Activated CD4-positive, alpha-beta T cell treated with anti-CD3 and anti-CD28 coated beads, Interleukin-2, amount 10 ng/mL, durations not matched to agents 7 days and 5 days (primary cell): ENCODE measurements at regions of chr17 and their contacts with region 1.

Region 1: GRCh38 chr17:27578718-27579085 is 52.3 kb upstream of the LGALS9 start:
- DNase-seq: peak; percentile 46
- H3K4me3 Mint-ChIP-seq: no peak overlapping the region
- H3K27ac Mint-ChIP-seq: peak overlapping the region; percentile 67
- H3K4me1 Mint-ChIP-seq: peaks cover 70% of the 10 kb centered on the region
- H3K27me3 Mint-ChIP-seq: no peaks in the 10 kb centered on the region

Region 2: GRCh38 chr17:27473748-27474609 is 104.7 kb before region 1 on chr17:
- CTCF ChIA-PET with region 1: interaction called, 10 read pairs
- POLR2A ChIA-PET with region 1: interaction called, 5 read pairs
- DNase-seq: peak; percentile 81
- H3K4me3 Mint-ChIP-seq: peak overlapping the region; percentile 55
- H3K27ac Mint-ChIP-seq: peak overlapping the region; percentile 97
- H3K4me1 Mint-ChIP-seq: peaks cover 93% of the 10 kb centered on the region
- H3K27me3 Mint-ChIP-seq: no peaks in the 10 kb centered on the region

Region 3: DNA sequence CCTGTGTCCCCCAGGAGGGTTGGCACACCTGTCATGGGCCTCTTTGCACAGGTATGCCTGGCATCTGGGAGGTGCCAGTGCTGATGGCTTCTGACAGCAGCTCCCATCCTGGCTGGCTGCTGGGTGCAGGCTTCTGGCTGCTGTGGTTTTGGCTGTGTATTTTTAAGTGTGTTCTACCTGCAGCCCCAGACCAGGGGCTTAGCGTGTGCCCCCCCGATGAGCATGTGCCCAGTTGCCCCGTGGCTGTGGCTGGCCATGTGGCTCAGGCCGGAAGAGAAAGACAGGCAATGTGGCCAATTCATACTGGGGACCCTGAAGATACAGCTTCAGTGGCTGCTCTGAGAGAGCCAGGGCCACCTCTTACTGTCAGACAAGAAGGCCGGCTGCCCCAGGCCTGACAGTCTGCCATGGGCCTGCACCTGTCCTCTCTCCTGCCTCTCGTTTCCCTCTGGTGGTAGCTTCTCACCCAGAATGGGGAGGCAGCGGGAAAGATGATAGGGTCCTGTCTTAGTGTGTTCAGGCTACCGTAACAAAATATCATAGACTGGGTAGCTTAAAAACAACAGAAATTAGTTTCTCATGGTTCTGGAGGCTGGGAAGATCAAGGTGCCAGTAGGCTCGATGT is 14.6 kb after region 1 on chr17:
- CTCF ChIA-PET with region 1: interaction called, 33 read pairs
- POLR2A ChIA-PET with region 1: no interaction called
- DNase-seq: no peak
- H3K4me3 Mint-ChIP-seq: no peak overlapping the region
- H3K27ac Mint-ChIP-seq: no peak overlapping the region
- H3K4me1 Mint-ChIP-seq: peaks cover 18% of the 10 kb centered on the region
- H3K27me3 Mint-ChIP-seq: no peaks in the 10 kb centered on the region